ENCODE measurements at regions of chr22 and their contacts with region 1.

Region 1: GRCh38 chr22:42300259-42301076 is 30.0 kb upstream of the TCF20 start:
- DNase-seq: no peak
- H3K4me3 ChIP-seq: no peak overlapping the region
- H3K27ac ChIP-seq: peak overlapping the region; percentile 27
- H3K4me1 ChIP-seq: peaks cover 28% of the 10 kb centered on the region
- H3K27me3 ChIP-seq: no peaks in the 10 kb centered on the region
- CTCF ChIP-seq: no peak
- POLR2A ChIP-seq: no peak

Region 2: GRCh38 chr22:42229455-42230149 is 70.9 kb before region 1 on chr22:
- intact Hi-C with region 1: loop called (anchors 10 kb)
- DNase-seq: no peak
- H3K4me3 ChIP-seq: no peak overlapping the region
- H3K27ac ChIP-seq: no peak overlapping the region
- H3K4me1 ChIP-seq: peaks cover 61% of the 10 kb centered on the region
- H3K27me3 ChIP-seq: no peaks in the 10 kb centered on the region
- CTCF ChIP-seq: no peak
- POLR2A ChIP-seq: no peak

Region 3: GRCh38 chr22:42353883-42354727 is 53.6 kb after region 1 on chr22:
- intact Hi-C with region 1: no loop called
- DNase-seq: no peak
- H3K4me3 ChIP-seq: no peak overlapping the region
- H3K27ac ChIP-seq: no peak overlapping the region
- H3K4me1 ChIP-seq: peaks cover 22% of the 10 kb centered on the region
- H3K27me3 ChIP-seq: no peaks in the 10 kb centered on the region
- CTCF ChIP-seq: no peak
- POLR2A ChIP-seq: no peak

Region 4: DNA sequence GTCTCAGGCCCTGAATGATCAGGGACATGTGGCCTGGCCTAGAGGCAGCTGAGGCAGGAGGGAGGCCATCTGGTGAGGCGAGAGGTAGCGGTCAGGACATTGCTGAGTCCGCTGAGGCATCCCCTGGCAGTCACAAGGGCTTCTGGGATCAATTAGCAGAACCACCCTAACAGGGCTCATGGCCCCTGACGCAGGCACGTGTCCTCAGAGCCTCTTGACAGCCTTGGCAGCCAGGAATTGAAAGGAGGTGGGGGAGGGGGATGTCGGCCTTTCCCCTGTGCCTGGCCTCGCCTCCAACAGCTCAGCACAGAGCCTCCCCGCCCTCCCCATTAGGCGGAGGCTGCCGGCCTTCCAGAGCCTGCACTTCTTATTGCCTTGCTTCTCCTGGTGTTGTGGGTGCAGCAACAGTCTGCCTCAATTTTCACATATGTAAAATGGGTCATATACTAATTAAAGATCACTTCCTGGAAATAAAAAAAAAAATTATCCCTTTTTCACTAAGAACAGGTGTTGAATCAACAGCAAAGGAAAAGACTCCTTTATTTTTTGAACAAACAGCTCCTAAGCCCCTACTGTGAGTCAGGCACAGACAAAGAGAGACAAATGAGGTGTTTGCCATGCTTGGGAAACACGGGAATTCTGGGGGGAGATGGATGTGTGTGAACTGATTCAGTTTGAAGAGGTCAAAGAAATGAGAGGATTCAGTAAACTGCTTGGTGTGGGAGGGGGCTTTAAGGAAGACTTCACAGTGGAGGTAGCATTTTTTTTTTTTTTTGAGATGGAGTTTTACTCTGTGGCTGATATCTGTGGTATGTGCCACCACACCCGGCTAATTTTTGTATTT is 76.5 kb after region 1 on chr22:
- intact Hi-C with region 1: no loop called
- DNase-seq: peak in 1 of 2 donors; percentile 96
- H3K4me3 ChIP-seq: no peak overlapping the region
- H3K27ac ChIP-seq: peak overlapping the region; percentile 81
- H3K4me1 ChIP-seq: peaks cover 28% of the 10 kb centered on the region
- H3K27me3 ChIP-seq: no peaks in the 10 kb centered on the region
- CTCF ChIP-seq: no peak
- POLR2A ChIP-seq: no peak